Ascending aorta (tissue), 2 donors: ENCODE measurements at regions of chr5 and their contacts with region 1.

Region 1: GRCh38 chr5:142746532-142747433 is 23.4 kb upstream of the ARHGAP26 start:
- DNase-seq: no peak
- H3K4me3 ChIP-seq: no peak overlapping the region
- H3K27ac ChIP-seq: no peak overlapping the region
- H3K4me1 ChIP-seq: peaks cover 20 to 21% of the 10 kb centered on the region in 2 donors
- H3K27me3 ChIP-seq: no peaks in the 10 kb centered on the region
- CTCF ChIP-seq: no peak

Region 2: DNA sequence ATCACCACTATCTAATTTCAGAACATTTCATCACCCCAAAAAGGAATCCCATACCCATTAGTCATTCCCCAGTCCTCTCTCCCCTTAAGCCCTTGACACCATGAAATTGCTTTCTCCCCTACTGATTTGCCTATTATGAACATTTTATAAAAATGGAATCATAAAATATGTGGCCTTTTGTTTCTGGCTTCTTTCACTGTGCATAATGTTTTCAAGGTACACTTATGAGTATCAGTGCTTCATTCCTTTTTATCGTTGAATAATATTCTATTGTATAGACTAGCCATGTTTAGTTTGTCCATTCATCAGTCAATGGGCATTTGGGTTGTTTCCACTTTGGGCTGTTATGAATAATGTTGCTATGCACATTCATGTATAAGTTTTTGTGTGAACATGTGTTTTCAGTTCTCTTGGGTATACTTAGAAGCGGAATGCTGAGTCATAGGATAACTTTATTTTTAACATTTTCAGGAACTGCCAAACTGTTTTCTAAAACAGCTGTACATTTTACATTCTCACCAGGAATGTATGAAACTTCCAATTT is 20.5 kb before region 1 on chr5:
- intact Hi-C with region 1: loop called (anchors 2 kb)
- DNase-seq: peak in 1 of 2 donors; percentile 8
- H3K4me3 ChIP-seq: no peak overlapping the region
- H3K27ac ChIP-seq: peak overlapping the region; percentile 7 to 46
- H3K4me1 ChIP-seq: peaks cover 7 to 16% of the 10 kb centered on the region in 2 donors
- H3K27me3 ChIP-seq: no peaks in the 10 kb centered on the region
- CTCF ChIP-seq: no peak

Region 3: GRCh38 chr5:142816531-142817430 is 70.0 kb after region 1 on chr5:
- intact Hi-C with region 1: no loop called
- DNase-seq: peak; percentile 36 to 75
- H3K4me3 ChIP-seq: no peak overlapping the region
- H3K27ac ChIP-seq: peak overlapping the region; percentile 66 to 69
- H3K4me1 ChIP-seq: peaks cover 10 to 56% of the 10 kb centered on the region in 2 donors
- H3K27me3 ChIP-seq: no peaks in the 10 kb centered on the region
- CTCF ChIP-seq: no peak

Region 4: GRCh38 chr5:143290125-143290524 is 543.3 kb after region 1 on chr5:
- intact Hi-C with region 1: no loop called
- DNase-seq: no peak
- H3K4me3 ChIP-seq: no peak overlapping the region
- H3K27ac ChIP-seq: no peak overlapping the region
- H3K4me1 ChIP-seq: no peaks in the 10 kb centered on the region
- H3K27me3 ChIP-seq: no peaks in the 10 kb centered on the region
- CTCF ChIP-seq: no peak